ENCODE measurements at regions of chr7 and their contacts with region 1.

Region 1: GRCh38 chr7:73526896-73527821 is 5.1 kb upstream of the BAZ1B start:
- DNase-seq: no peak
- H3K4me3 ChIP-seq: no peak overlapping the region
- H3K27me3 ChIP-seq: no peaks in the 10 kb centered on the region
- CTCF ChIP-seq: no peak

Region 2: DNA sequence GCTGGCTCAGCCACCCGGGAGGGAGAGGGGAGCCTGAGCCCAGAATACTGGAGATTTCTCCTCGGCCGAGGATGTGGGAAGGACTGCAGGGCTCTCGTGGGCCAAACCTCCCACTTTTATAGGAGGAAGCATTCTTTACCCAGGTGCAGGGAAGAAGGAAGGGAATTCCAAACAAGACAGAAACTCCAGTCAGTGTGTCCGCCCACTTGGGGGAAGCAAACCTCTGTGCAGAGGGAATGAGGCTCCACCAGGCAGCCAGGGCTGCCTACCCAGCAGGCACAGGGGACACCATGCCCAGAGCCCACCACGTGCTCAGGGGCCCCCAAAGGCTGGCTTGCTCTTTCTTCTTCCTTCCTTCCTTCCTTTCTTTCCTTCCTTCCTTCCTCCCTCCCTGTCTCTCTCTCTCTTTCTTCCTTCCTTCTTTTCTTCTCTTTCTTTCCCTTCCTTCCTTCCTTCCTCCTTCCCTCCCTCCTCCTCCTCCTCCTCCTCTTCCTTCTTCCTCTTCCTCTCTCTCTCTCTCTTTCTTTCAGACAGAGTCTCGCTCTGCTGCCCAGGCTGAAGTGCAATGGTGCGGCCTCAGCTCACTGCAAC is 109.0 kb before region 1 on chr7:
- CTCF ChIA-PET with region 1: no interaction called
- POLR2A ChIA-PET with region 1: no interaction called
- DNase-seq: no peak
- H3K4me3 ChIP-seq: no peak overlapping the region
- H3K27me3 ChIP-seq: peaks cover 2% of the 10 kb centered on the region; the same call in 1 of the 2 replicates
- CTCF ChIP-seq: no peak

Region 3: GRCh38 chr7:73448609-73449008 is 78.5 kb before region 1 on chr7:
- CTCF ChIA-PET with region 1: no interaction called
- POLR2A ChIA-PET with region 1: no interaction called
- DNase-seq: peak; percentile 30
- H3K4me3 ChIP-seq: no peak overlapping the region
- H3K27me3 ChIP-seq: no peaks in the 10 kb centered on the region
- CTCF ChIP-seq: no peak

Region 4: GRCh38 chr7:73678862-73679261 is 151.7 kb after region 1 on chr7:
- CTCF ChIA-PET with region 1: no interaction called
- POLR2A ChIA-PET with region 1: interaction called, 15 read pairs
- DNase-seq: no peak
- H3K4me3 ChIP-seq: no peak overlapping the region
- H3K27me3 ChIP-seq: no peaks in the 10 kb centered on the region
- CTCF ChIP-seq: no peak

Measured in BJ (cell line).